Left ventricle myocardium superior (tissue), 1 donor: ENCODE measurements at regions of chr2 and their contacts with region 1.

Region 1: GRCh38 chr2:148509288-148509902 is 135.2 kb upstream of the EPC2 start:
- DNase-seq: peak; percentile 82
- ATAC-seq: peak; percentile 99

Region 2: GRCh38 chr2:146669735-146670134 is 1839.7 kb before region 1 on chr2:
- intact Hi-C with region 1: no loop called
- DNase-seq: no peak
- ATAC-seq: no peak

Region 3: DNA sequence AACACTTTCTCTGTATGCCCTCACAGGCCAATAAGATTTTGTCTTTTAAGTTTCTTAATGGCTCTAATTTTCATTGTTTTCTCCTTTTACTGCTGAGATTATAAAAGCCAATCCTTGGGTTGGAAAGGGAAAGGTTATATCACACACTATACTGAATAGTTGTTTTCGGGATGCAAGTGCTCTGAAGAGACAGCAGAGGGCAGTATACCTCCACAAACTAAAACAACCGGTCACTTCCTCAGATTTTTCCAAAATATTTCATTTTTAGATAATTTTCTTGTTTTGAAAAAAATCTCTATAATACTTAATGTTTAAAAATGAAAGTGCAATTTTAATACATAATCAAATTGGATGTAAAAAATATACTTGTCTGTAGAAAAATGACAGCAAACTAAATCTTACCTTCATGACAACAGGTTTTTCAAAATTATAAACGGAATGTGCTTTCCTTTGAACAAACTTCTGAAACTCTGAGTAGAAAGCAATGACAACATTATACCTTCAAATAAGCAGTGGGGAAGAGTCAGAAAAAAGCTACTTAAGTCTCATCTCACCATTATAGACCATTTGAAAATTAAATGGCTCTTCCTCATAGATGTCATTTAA is 571.5 kb before region 1 on chr2:
- intact Hi-C with region 1: loop called (anchors 10 kb)
- DNase-seq: no peak
- ATAC-seq: peak; percentile 42